ENCODE measurements at regions of chr18 and their contacts with region 1.

Region 1: GRCh38 chr18:12947355-12948041 is at the start of gene SEH1L:
- DNase-seq: peak; percentile 99 to 100
- ATAC-seq: peak; percentile 84 to 89
- H3K4me3 ChIP-seq: peak within 1 kb of the TSS; percentile 80 to 97 (median 92)
- H3K27ac ChIP-seq: peak within 1 kb of the TSS; percentile 96 to 100 (median 99)
- H3K4me1 ChIP-seq: peaks cover 17 to 19% of the 10 kb centered on the region in 2 donors
- H3K27me3 ChIP-seq: no peaks in the 10 kb centered on the region
- CTCF ChIP-seq: no peak
- POLR2A ChIP-seq: no peak
- total RNA-seq, gene SEH1L: 19.8 to 29.9 (median 28.2) TPM

Region 2: GRCh38 chr18:12391618-12392165 is 555.8 kb before region 1 on chr18:
- in situ Hi-C with region 1: loop called in 3 of 4 experiments (anchors 10 to 25 kb)
- intact Hi-C with region 1: loop called (anchors 5 kb)
- DNase-seq: peak; percentile 33 to 34
- ATAC-seq: peak; percentile 90 to 91
- H3K4me3 ChIP-seq: no peak overlapping the region
- H3K27ac ChIP-seq: no peak overlapping the region
- H3K4me1 ChIP-seq: no peaks in the 10 kb centered on the region
- H3K27me3 ChIP-seq: no peaks in the 10 kb centered on the region
- CTCF ChIP-seq: peak; percentile 72 to 91 (median 86)
- POLR2A ChIP-seq: no peak

Region 3: DNA sequence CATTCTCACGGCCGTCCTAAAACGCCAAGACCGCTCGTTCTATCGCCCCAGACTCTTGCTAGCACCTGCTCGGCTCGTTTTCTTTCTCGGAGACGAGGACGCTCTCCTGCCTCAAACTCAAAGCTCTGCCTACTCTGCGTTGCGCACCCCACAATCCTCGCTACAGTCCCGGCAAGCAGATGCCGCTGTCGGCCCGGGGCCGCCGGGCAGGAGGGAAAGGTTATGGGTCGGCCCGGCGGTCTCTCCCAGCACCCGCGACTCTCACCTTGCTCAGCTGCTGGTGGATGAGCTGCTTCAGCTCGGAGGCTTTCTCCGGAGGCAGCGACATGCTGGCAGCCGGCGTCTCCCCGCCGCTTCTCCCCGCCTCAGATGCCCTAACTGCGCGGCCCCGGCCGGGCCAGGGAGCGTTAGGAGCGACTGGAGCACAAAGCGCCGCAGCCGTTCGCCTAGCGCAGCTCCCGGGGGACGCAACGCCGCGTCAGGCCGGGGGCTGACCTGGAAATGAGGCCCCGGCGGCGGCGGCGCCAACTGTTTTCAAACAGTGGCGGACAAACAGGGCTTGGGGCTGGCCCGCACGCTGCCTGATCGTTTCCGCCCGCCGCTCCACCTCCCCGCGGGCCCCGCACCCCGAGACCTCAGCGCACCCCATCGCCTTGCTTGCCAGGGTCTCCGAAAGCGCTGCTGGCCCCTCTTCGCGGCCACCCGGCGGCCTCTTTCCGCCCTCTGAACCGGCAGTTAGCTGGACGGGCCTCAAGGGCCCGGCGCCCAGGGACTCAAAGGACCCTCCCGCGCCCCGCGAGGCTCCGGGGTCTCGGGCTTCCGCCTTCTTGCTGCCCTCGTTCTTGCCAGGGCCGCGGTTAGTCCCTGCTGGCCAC is 245.0 kb before region 1 on chr18 and contains the starts of genes CEP76 and PSMG2:
- in situ Hi-C with region 1: no loop called
- intact Hi-C with region 1: loop called (anchors 10 kb)
- DNase-seq: peak; percentile 76 to 87
- ATAC-seq: peak; percentile 95 to 96
- H3K4me3 ChIP-seq: peak within 1 kb of the TSS; percentile 72 to 99 (median 94)
- H3K27ac ChIP-seq: peak within 1 kb of the TSS; percentile 95 to 99 (median 98)
- H3K4me1 ChIP-seq: peaks cover 28 to 29% of the 10 kb centered on the region in 2 donors
- H3K27me3 ChIP-seq: no peaks in the 10 kb centered on the region
- CTCF ChIP-seq: peak in 2 of 5 experiments; percentile 6 to 16
- POLR2A ChIP-seq: peak; percentile 76 to 84
- total RNA-seq, gene CEP76: 5.4 to 9.1 (median 6.8) TPM
- total RNA-seq, gene PSMG2: 49.6 to 94.2 (median 63.4) TPM

Region 4: DNA sequence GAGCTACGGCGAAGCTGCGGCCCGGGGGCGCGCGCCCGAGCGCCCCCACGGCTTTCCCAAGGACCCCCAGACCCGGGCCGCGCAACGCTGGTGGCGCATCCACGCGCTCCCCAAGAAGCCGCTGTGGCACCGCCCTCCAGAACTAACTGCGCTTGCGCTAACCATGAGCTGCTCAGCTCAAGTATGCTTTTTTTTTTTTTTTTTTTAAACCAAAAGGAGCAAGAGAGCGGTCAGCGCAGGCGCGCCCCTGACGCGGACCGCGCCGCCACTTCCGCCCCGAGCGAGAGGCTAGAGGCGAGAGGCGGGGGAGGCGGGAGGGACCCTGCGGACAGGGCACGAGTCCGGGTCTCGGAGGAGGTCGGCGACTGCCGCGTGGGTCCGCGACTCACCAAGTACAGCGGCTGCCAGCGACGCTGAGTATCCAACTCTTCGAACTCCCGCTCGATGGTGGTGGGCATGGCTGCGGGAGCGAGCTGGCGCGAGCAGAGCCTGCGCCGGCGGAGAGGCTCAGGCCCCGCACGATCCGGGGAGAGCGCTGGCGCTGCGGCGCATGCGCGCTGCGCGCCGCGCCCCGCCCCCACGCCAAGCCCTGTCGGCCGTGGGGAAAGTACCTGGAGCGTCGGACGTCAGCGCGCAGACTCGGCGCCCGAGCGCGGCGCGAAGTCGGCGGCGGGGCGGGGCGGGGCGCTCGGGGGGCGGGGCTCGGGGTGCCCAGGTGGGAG is 63.7 kb before region 1 on chr18 and contains the start of gene PTPN2:
- in situ Hi-C with region 1: loop called in 1 of 4 experiments (anchors 10 kb)
- intact Hi-C with region 1: loop called (anchors 1 kb)
- DNase-seq: peak; percentile 88 to 92
- ATAC-seq: peak; percentile 91 to 95
- H3K4me3 ChIP-seq: peak within 1 kb of the TSS; percentile 72 to 90 (median 82)
- H3K27ac ChIP-seq: peak within 1 kb of the TSS; percentile 92 to 98 (median 96)
- H3K4me1 ChIP-seq: peaks cover 16 to 20% of the 10 kb centered on the region in 2 donors
- H3K27me3 ChIP-seq: no peaks in the 10 kb centered on the region
- CTCF ChIP-seq: no peak
- POLR2A ChIP-seq: peak; percentile 93 to 94
- total RNA-seq, gene PTPN2: 17.0 to 20.0 (median 17.5) TPM

Region 5: DNA sequence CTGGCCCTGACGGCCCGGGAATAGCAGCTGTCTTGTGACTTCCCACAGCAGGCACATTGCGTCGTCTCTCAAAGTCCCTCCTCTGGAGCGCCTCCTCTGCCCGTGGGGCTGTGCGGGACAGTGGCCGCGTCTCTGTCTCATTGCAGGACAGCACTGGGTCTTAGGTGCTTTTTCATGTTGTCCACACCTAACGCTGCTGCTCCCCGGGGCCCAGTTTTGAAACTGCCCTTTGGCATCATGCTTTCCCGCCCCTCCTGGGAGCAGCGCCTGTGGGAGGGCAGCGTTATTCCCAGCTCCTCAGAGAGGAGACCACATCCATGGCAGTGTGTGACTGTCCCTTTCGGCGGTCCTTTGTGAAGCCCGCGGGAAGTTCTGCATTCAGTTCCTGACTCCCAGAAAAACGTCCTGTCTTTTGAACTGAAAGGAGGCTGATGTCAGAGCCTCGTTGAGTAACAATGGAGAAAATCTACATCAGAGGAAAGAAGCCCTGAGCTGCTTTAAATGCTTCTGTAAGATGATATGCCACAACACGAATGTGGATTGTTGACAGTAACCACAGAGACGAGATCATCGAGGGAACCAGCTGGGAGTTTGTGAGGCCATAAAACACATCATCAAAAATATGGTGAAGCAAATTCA is 552.8 kb after region 1 on chr18:
- in situ Hi-C with region 1: no loop called
- intact Hi-C with region 1: loop called (anchors 10 kb)
- DNase-seq: peak; percentile 49 to 65
- ATAC-seq: peak; percentile 84 to 93
- H3K4me3 ChIP-seq: peak overlapping the region; percentile 45 to 55 (median 52)
- H3K27ac ChIP-seq: peak overlapping the region; percentile 85 to 96 (median 88)
- H3K4me1 ChIP-seq: peaks cover 35 to 43% of the 10 kb centered on the region in 2 donors
- H3K27me3 ChIP-seq: no peaks in the 10 kb centered on the region
- CTCF ChIP-seq: peak in 1 of 5 experiments; percentile 18
- POLR2A ChIP-seq: peak; percentile 56 to 64